Activated CD8-positive, alpha-beta memory T cell treated with anti-CD3 and anti-CD28 coated beads, Interleukin-2, amount 10 ng/mL, durations not matched to agents 7 days and 5 days (primary cell): ENCODE measurements at regions of chr12 and their contacts with region 1.

Region 1: DNA sequence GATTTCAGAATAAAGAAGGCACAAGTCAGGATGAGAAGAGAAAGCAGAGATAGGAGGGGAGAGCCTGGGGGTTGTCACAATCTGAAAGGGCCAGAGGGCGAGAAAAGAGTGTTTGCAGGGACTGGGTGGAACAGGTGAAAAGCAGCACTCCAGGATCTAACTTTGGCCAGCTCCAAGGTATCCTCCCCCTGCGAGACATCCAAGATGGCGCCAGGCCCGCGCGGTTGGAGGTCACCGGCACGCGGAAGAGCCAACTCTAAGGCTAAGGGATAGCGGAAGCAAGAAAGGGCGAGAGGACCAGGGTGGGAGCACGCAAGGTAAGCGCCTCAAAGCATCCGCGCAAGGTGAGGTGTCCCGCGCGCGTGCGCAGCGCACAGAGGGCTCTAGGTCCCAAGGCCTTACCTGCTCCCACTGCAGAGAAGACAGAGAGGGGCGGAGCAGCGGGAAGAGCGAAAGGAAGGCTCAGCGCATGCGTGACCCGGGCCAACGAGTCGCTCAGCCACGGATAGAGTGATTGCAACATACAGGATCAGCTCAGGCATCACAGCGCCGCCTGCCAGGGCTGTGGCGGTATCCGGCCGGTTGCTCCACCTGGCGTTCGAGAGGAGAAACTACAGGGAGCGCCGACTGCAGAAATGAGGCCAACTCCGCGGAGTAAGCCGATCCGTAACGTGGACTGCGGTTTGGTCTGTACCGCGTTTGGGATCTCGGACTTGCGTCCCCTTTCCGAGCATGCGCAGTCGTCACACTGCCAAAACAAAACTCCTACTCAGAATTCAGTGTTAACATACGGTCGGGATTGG is at the start of gene ATP5MC2:
- DNase-seq: peak; percentile 98
- ATAC-seq: peak; percentile 97
- H3K4me3 Mint-ChIP-seq: peak within 1 kb of the TSS; percentile 87
- H3K27ac Mint-ChIP-seq: peak within 1 kb of the TSS; percentile 90
- H3K4me1 Mint-ChIP-seq: peaks cover 40% of the 10 kb centered on the region
- H3K27me3 Mint-ChIP-seq: peaks cover 29% of the 10 kb centered on the region
- total RNA-seq, gene ATP5MC2: 253 to 333 TPM

Region 2: GRCh38 chr12:53508534-53509199 is 167.2 kb before region 1 on chr12:
- CTCF ChIA-PET with region 1: interaction called, 11 read pairs
- DNase-seq: peak; percentile 92
- ATAC-seq: peak; percentile 98
- H3K4me3 Mint-ChIP-seq: no peak overlapping the region
- H3K27ac Mint-ChIP-seq: peak overlapping the region; percentile 78
- H3K4me1 Mint-ChIP-seq: peaks cover 13% of the 10 kb centered on the region
- H3K27me3 Mint-ChIP-seq: no peaks in the 10 kb centered on the region

Region 3: GRCh38 chr12:53543539-53543938 is 132.3 kb before region 1 on chr12:
- CTCF ChIA-PET with region 1: interaction called, 77 read pairs
- DNase-seq: peak; percentile 70
- ATAC-seq: peak; percentile 98
- H3K4me3 Mint-ChIP-seq: no peak overlapping the region
- H3K27ac Mint-ChIP-seq: peak overlapping the region; percentile 63
- H3K4me1 Mint-ChIP-seq: peaks cover 11% of the 10 kb centered on the region
- H3K27me3 Mint-ChIP-seq: no peaks in the 10 kb centered on the region

Region 4: DNA sequence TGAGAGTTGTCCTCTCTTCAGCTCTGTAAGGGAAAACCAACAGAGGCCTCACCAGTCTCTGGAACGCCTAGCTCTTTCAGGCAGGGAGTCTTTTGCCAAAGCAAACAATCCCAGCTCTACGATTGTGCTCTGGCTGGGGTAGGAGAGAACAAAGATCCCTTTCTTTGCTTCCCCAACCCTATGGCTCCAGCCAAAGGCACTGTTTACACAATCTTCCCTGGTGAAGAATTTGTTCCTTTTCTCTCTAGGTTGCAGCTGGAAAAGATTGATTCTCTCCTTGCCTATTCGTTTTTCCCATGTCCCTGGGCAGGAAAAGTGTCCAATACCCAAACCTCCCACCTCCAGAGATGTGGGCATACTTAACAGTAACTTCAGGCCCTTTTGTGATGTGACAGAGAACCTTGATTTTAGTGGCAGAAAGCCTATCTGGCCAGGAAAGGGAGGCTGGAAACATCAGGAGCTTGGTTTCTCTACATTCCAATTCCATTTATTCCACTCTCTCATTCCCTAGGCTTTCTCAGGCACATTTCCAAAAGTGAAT is 16.8 kb before region 1 on chr12:
- CTCF ChIA-PET with region 1: interaction called, 12 read pairs
- DNase-seq: no peak
- ATAC-seq: no peak
- H3K4me3 Mint-ChIP-seq: no peak overlapping the region
- H3K27ac Mint-ChIP-seq: no peak overlapping the region
- H3K4me1 Mint-ChIP-seq: no peaks in the 10 kb centered on the region
- H3K27me3 Mint-ChIP-seq: no peaks in the 10 kb centered on the region

Region 5: GRCh38 chr12:53746592-53747092 is 70.8 kb after region 1 on chr12:
- CTCF ChIA-PET with region 1: interaction called, 63 read pairs
- DNase-seq: peak; percentile 92
- ATAC-seq: peak; percentile 79
- H3K4me3 Mint-ChIP-seq: no peak overlapping the region
- H3K27ac Mint-ChIP-seq: no peak overlapping the region
- H3K4me1 Mint-ChIP-seq: peaks cover 16% of the 10 kb centered on the region
- H3K27me3 Mint-ChIP-seq: peaks cover 39% of the 10 kb centered on the region

Region 6: GRCh38 chr12:53770281-53770680 is 94.4 kb after region 1 on chr12:
- CTCF ChIA-PET with region 1: no interaction called
- DNase-seq: no peak
- ATAC-seq: no peak
- H3K4me3 Mint-ChIP-seq: no peak overlapping the region
- H3K27ac Mint-ChIP-seq: no peak overlapping the region
- H3K4me1 Mint-ChIP-seq: no peaks in the 10 kb centered on the region
- H3K27me3 Mint-ChIP-seq: peaks cover 59% of the 10 kb centered on the region